ENCODE measurements at regions of chrX and their contacts with region 1.

Region 1: DNA sequence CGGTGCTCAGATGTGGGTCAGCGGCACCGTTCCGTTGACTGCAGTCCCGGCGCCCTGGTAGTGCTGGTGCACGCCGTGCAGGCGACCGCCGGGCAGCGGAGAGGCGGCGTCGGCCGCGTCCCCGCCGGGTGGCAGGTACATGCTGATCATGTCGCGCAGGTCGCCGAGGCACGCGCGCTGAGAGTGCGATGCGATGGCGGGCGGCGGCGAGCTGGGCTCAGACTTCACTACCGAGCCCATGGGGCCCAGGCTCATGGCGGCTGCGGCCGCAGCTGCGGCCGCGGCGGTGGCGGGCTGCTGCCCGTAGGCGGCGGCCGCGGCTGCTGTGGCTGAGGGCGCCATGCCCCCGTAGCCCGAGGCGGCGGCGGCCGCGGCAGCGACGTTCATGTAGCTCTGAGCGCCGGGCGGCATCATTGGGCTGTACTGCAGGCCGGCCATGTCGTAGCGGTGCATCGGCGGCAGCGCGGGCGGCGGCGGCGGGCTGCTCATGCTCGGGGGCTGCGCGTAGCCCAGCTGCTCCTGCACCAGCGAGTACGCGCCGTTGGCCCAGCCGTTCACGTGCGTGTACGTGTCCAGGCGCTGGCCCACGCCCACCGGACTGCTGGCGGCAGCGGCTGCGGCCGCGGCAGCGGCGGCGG is 1.0 kb downstream of the SOX3 start:
- DNase-seq: no peak
- H3K4me3 Mint-ChIP-seq: no peak overlapping the region
- H3K27ac Mint-ChIP-seq: no peak overlapping the region
- H3K4me1 Mint-ChIP-seq: no peaks in the 10 kb centered on the region
- H3K27me3 Mint-ChIP-seq: peaks cover 49% of the 10 kb centered on the region

Region 2: DNA sequence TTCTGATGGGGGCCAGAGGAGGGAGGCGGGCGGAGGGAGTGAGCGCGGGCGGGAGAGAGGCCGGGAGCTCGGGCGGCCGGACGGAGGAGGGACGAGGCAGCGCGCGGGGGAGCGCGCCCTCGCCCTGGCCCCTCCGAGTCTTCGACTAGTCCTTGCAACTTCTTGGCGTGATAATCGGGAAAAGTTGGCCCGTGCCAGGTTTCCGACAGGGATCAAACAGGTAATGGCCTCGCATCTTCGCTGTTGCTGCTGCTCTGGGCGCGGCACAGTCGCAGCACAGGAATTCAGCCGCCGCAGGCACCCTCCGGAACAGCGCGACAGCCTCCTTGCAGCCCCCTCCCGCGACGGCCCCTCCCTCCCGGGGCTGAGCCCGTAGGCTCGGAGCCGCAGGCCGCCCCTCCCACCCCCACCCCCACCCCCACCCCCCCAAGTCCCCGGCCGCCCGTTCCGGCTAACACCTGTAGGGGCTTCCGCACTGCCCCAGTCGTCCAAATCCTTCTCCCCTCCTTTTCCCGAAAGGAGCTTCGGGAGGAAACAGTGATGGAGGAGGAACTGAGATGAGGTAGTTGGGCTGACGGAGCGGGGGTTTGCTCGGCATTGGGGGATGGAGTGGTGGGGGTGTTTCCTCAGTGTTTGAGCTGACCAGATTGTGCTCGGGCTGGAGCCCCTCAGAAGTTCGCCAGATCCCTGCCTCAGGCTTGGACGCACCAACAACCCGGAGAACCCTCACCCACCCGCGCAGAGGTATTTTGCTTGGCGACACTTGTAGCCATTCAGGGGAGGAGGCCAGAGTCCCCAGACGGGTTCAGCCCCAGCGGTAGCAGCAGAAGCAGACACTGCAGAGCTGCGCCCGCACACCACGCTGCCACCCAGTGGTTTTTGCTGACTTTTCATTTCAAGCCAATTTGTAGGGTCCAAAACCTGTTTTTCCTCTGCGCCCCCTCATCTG is 1792.2 kb before region 1 on chrX and contains the start of gene FGF13:
- intact Hi-C with region 1: loop called (anchors 5 kb)
- DNase-seq: no peak
- H3K4me3 Mint-ChIP-seq: no peak within 1 kb of the TSS
- H3K27ac Mint-ChIP-seq: no peak within 1 kb of the TSS
- H3K4me1 Mint-ChIP-seq: no peaks in the 10 kb centered on the region
- H3K27me3 Mint-ChIP-seq: peaks cover 20% of the 10 kb centered on the region
- total RNA-seq, gene FGF13: not detected in 2 replicates

Region 3: DNA sequence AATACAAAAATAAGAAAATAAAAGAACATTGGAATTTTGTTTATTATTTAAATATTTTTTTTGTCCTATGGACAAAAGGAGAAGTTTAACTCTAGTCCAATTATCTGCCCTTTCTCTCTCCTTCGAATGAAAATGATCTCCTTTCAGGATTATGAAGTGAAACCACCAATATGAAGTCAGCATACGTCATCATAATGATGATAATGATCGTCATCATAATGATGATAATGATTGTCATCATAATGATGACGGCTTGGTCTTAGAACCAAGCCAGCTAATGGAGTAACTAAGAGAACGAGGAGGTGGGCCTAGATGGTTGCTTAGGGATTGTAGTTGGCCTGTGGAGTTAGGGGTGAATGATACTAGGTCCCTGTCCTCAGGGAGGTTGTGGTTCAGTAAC is 183.9 kb after region 1 on chrX:
- intact Hi-C with region 1: no loop called
- DNase-seq: no peak
- H3K4me3 Mint-ChIP-seq: no peak overlapping the region
- H3K27ac Mint-ChIP-seq: no peak overlapping the region
- H3K4me1 Mint-ChIP-seq: no peaks in the 10 kb centered on the region
- H3K27me3 Mint-ChIP-seq: no peaks in the 10 kb centered on the region